Posterior vena cava (tissue), 2 donors: ENCODE measurements at regions of chr17 and their contacts with region 1.

Region 1: DNA sequence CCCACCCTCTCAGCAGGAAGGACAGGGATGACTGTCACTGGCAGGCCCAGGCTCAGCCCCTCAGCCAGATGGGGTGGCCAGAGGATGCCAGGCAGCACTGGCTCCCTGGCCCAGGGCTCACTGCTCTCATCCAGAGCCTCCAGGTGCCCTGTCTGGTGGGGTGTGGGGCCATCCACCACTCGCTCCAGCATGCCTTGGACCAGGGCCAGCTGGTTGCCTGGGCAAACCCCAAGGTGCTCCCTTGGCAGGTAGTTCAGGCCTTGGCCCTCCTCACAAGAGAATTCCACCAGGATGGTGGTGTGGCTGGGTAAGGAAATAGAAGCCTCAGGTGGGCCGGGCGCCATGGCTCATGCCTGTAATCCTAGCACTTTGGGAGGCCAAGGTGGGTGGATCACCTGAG is 29.4 kb downstream of the LGALS9 start:
- DNase-seq: no peak

Region 2: DNA sequence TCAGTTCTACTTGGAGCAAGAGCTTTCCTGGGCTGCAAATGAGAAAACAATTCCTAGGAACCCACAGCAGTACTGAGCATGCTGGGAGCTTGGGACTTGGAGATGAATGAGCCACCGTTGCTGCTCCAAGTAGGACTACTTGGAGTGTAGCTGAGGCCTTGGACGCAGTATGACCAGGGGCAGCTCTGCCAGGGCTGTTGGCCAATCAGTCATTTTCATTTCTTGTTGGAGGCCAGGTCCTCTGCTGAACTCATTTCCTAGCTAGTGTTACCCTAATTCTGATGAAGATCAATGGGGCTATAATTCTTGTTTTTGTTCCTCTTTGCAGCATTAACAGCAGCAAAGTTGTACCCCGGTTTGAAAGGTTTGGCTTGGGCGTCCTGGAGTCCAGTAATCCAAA is 37.4 kb before region 1 on chr17:
- intact Hi-C with region 1: no loop called
- DNase-seq: no peak

Region 3: GRCh38 chr17:27756512-27757371 is 96.3 kb after region 1 on chr17:
- intact Hi-C with region 1: loop called (anchors 5 kb)
- DNase-seq: peak; percentile 88